Dorsolateral prefrontal cortex (tissue), 120 donors: ENCODE measurements at regions of chr1 and their contacts with region 1.

Region 1: GRCh38 chr1:21782868-21783678 is at the start of gene USP48:
- DNase-seq: peak; percentile 97 to 99 (median 98)
- H3K4me3 ChIP-seq: peak within 1 kb of the TSS; percentile 64 to 100 (median 99)
- H3K27ac ChIP-seq: peak within 1 kb of the TSS; percentile 95 to 100 (median 100)
- H3K27me3 ChIP-seq: no peaks in the 10 kb centered on the region
- CTCF ChIP-seq: peak in 12 of 56 donors; percentile 4 to 34 (median 15)
- total RNA-seq, gene USP48: 77.5 to 131 (median 105) TPM

Region 2: GRCh38 chr1:21508580-21509350 is 274.3 kb before region 1 on chr1:
- intact Hi-C with region 1: loop called in 1 of 2 experiments (anchors 10 kb)
- DNase-seq: peak in 5 of 10 donors; percentile 22 to 69 (median 34)
- H3K4me3 ChIP-seq: peak overlapping the region in 48 of 59 donors; percentile 18 to 62 (median 45)
- H3K27ac ChIP-seq: peak overlapping the region in 5 of 59 donors; percentile 6 to 32 (median 23)
- H3K27me3 ChIP-seq: peaks cover 0 to 20% (median 7%) of the 10 kb centered on the region in 45 donors
- CTCF ChIP-seq: peak in 55 of 56 donors; percentile 24 to 77 (median 58)

Region 3: DNA sequence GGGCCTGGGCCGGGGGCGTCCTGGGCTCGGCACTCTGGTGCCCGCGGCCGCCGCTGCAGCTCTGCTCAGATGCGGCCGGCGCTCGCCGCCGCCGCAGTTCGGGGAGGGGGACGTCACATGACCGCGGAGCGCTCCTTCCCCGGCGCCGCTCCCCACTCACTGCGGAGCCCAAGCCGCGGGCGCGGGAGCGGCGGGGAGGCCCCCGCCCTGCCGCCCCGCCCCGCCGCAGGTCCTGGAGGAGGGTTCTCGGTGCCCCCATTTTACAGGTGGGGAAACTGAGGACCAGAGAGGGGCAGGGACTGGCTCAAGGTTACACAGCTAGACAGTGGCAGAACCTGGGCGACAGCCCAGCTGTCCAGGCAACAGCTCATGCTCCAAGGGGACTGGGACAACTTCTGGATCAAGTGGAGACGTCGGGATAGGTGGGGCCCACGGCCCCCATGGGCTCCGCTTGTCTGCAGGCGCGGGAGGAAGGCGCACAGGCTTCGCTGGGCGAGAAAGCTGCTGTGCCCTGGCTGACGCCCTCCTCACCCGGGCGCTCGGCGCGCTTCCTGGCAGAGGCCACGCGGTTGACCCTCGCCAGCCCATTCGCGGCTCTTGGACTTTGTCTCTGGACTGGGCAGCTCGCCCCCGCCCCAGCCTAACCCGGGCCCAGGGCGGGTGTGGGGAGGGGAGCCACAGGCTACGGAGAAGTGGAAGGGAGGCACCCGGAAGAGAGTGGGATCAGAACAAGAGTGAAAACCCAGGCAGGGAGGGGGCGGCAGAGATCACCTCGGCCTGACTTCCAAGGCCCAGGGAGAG is 113.6 kb before region 1 on chr1 and contains the start of gene RAP1GAP:
- intact Hi-C with region 1: loop called in 1 of 2 experiments (anchors 5 kb)
- DNase-seq: peak in 5 of 10 donors; percentile 58 to 82 (median 80)
- H3K4me3 ChIP-seq: peak within 1 kb of the TSS; percentile 39 to 78 (median 64)
- H3K27ac ChIP-seq: peak within 1 kb of the TSS in 56 of 59 donors; percentile 24 to 93 (median 82)
- H3K27me3 ChIP-seq: peaks cover 0 to 10% (median 0%) of the 10 kb centered on the region in 45 donors
- CTCF ChIP-seq: peak in 2 of 56 donors; percentile 4 to 5
- total RNA-seq, gene RAP1GAP: 108 to 286 (median 187) TPM

Region 4: DNA sequence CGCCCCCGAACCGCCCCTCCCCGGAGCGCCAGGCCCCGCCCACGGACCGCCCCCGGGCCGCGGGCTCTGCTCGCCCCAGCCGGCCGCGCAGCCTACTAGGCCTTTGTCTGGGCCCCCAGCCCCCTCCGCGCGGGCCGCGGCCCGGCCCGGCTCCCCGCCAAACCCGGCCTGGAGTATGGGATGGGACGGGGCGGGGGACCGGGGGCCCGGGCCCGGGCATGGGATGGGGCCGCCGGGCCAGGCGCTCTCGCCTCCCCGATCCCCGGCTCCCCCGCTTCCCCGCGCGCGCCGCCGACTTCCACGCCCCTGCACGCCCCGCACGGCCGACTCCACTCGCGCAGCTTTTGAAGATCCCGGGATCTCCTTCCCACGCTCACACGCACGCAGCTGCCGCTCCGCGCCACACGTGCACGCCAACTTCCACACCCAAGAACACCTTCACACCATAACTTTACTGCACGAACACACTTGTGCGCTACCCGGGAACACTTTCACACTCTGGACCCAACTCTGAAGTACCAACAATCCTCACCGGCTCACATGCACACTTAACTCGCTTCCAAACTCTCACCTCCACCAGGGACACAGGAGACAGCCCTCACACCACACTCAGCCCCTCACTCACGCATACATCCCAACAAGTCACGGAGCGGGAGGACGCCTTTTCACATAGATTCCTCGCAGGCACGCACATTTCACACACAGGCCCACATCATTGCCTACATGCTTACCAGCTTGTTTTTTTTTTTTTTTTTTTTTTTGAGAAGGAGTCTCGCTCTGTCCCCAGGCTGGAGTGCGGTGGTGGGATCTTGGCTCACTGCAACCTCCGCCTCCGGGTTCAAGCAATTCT is 154.5 kb after region 1 on chr1:
- intact Hi-C with region 1: loop called (anchors 2 to 5 kb)
- DNase-seq: peak; percentile 42 to 90 (median 82)
- H3K4me3 ChIP-seq: peak overlapping the region; percentile 8 to 81 (median 64)
- H3K27ac ChIP-seq: peak overlapping the region in 42 of 59 donors; percentile 6 to 88 (median 54)
- H3K27me3 ChIP-seq: peaks cover 0 to 4% (median 0%) of the 10 kb centered on the region in 45 donors
- CTCF ChIP-seq: peak in 1 of 56 donors; percentile 5

Region 5: DNA sequence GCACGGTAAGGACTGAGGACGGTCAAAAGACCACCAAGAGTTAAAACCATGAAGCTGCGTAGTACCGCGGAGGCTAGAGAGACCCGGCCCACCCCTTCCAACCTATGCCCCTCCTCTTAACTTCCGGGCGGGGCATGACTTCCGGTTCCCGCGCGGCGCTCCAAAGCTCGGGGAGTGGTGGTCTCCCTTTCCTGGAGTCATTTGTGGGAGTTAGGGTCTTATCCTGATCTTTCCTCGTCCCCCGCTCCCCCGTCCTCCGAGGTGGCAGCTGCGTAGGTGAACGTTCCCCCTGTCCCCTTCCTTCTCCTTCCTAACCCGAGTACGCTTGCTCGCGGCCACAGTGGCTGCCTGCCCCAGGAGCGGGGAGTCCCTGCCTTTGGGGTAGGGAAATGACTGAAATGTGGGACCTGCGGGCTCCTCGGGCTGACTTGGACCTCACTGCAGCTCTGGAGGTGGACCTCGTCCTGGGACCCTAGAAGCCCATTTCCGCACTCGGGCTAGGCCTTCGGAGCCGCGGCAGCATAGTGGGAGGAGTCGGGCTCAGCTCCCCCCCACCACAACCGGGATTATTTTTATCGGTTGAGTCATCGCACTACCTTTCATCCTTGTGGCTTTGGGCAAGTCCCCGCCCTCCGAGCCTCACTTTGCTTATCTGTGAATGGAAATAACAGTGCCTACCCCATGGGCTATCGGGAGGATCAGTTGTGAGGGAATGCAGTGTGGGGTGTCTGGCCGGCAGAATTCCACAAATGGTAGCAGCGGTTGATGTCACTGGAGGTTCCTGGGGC is 242.5 kb after region 1 on chr1:
- intact Hi-C with region 1: loop called (anchors 2 to 10 kb)
- DNase-seq: peak; percentile 74 to 93 (median 87)
- H3K4me3 ChIP-seq: peak overlapping the region; percentile 57 to 100 (median 93)
- H3K27ac ChIP-seq: peak overlapping the region; percentile 57 to 98 (median 90)
- H3K27me3 ChIP-seq: no peaks in the 10 kb centered on the region
- CTCF ChIP-seq: peak in 22 of 56 donors; percentile 4 to 45 (median 24)